Activated naive CD4-positive, alpha-beta T cell treated with anti-CD3 and anti-CD28 coated beads, Interleukin-2, amount 10 ng/mL, durations not matched to agents 7 days and 5 days (primary cell): ENCODE measurements at regions of chr11 and their contacts with region 1.

Region 1: GRCh38 chr11:723120-723883 is 17.3 kb downstream of the EPS8L2 start:
- DNase-seq: peak; percentile 78
- H3K4me3 Mint-ChIP-seq: peak overlapping the region; percentile 65
- H3K27ac Mint-ChIP-seq: peak overlapping the region; percentile 16
- H3K4me1 Mint-ChIP-seq: peaks cover 36% of the 10 kb centered on the region
- H3K27me3 Mint-ChIP-seq: peaks cover 64% of the 10 kb centered on the region

Region 2: GRCh38 chr11:554824-555472 is 168.4 kb before region 1 on chr11:
- CTCF ChIA-PET with region 1: interaction called, 42 read pairs
- DNase-seq: peak; percentile 85
- H3K4me3 Mint-ChIP-seq: peak overlapping the region; percentile 52
- H3K27ac Mint-ChIP-seq: no peak overlapping the region
- H3K4me1 Mint-ChIP-seq: peaks cover 16% of the 10 kb centered on the region
- H3K27me3 Mint-ChIP-seq: peaks cover 64% of the 10 kb centered on the region

Region 3: GRCh38 chr11:650482-650881 is 72.8 kb before region 1 on chr11:
- CTCF ChIA-PET with region 1: no interaction called
- DNase-seq: no peak
- H3K4me3 Mint-ChIP-seq: no peak overlapping the region
- H3K27ac Mint-ChIP-seq: no peak overlapping the region
- H3K4me1 Mint-ChIP-seq: peaks cover 2% of the 10 kb centered on the region
- H3K27me3 Mint-ChIP-seq: no peaks in the 10 kb centered on the region

Region 4: DNA sequence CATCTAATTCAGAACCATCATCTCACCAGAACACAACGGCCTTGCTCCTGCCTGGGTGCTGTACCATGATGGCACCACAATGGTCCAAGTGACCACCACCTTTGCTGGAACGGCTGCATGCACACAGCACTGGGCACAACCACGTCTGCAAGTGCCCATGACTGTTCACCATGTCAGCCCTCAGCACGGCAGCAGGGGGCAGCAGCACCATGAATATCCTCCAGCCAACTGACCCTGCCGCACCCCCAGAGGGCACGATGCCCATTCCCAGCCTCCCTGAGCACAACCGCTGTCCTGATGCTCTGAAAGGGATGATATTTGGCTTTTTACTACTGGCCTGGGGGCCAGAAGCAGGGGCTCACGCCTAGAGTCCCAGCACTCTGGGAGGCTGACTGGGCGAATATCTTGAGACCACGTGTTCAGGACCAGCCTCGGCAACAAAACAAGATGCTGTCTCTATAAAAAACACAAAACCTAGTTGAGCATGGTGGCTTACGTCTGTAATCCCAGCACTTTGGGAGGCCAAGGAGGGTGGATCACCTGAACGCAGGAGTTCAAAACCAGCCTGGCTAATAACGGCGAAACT is 60.5 kb before region 1 on chr11:
- CTCF ChIA-PET with region 1: interaction called, 13 read pairs
- DNase-seq: peak; percentile 65
- H3K4me3 Mint-ChIP-seq: no peak overlapping the region
- H3K27ac Mint-ChIP-seq: no peak overlapping the region
- H3K4me1 Mint-ChIP-seq: no peaks in the 10 kb centered on the region
- H3K27me3 Mint-ChIP-seq: no peaks in the 10 kb centered on the region

Region 5: DNA sequence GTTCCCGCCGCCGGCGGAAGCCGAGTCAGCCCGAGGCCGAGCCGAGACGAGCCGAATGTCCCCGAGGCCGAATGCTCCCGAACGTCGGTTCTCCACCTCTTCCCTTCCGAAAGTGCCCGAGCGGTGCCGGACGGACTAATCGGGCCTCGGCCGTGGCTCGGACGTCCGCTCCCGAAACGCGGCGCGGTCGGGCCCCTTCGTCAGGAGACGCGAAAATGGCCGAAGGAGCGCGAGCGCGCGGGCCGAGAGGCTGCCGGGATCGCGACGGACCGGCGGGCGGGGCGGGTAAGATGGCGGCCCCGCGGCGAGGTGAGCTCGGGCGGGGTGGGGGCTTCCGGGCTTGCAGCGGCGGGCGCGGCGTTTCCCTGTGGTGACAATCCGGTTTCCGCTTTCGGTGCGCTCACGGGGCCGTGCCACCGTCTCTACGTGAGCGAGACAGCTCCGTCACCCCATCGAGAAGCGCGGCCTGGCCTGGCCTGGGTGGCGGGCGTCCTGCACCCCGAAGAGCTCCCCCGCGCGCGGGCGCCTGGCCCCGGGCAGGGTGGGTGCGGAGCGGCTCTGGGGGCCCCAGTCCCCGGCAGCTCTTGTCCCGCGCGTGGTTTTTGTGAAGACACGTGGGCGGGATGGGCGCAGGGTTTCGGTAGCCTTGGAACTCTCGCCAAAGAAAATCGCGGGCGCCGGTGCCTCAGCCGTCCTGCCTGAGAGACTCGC is 27.6 kb before region 1 on chr11 and contains the start of gene TMEM80:
- CTCF ChIA-PET with region 1: interaction called, 11 read pairs
- DNase-seq: peak; percentile 99
- H3K4me3 Mint-ChIP-seq: peak within 1 kb of the TSS; percentile 85
- H3K27ac Mint-ChIP-seq: peak within 1 kb of the TSS; percentile 96
- H3K4me1 Mint-ChIP-seq: peaks cover 61% of the 10 kb centered on the region
- H3K27me3 Mint-ChIP-seq: peaks cover 6% of the 10 kb centered on the region

Region 6: DNA sequence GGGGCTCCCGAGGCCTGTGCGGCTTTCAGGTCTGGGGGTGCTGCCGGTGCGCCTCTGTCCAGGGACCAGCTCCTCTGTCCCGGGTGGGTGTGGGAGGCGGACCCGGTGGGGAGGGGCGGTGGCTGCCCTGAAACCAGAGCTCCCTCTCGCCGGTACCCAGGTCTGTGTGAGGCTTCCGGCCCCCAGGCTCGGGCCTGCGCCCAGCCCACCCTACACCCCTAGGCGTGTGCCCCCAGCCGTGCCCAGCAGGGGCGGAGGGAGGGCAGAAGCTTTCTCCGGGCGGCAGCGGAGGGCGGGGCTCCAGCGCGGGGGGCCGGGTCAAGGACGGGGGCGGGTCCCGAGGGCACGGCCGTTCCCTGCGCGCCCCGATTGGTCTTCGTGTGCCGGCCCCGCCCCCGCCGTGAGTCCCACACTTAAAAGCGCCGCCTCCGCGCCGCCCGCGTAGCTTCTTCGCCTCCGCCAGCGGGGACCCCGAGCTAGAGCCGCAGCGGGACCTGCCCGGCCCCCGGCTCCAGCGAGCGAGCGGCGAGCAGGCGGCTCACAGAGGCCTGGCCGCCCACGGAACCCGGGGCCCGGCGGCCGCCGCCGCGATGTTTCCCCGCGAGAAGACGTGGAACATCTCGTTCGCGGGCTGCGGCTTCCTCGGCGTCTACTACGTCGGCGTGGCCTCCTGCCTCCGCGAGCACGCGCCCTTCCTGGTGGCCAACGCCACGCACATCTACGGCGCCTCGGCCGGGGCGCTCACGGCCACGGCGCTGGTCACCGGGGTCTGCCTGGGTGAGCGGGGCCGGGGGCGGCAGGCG is 96.0 kb after region 1 on chr11:
- CTCF ChIA-PET with region 1: no interaction called
- DNase-seq: peak; percentile 93
- H3K4me3 Mint-ChIP-seq: peak overlapping the region; percentile 82
- H3K27ac Mint-ChIP-seq: peak overlapping the region; percentile 90
- H3K4me1 Mint-ChIP-seq: peaks cover 15% of the 10 kb centered on the region
- H3K27me3 Mint-ChIP-seq: no peaks in the 10 kb centered on the region